CD4-positive, alpha-beta memory T cell (primary cell): ENCODE measurements at regions of chr10 and their contacts with region 1.

Region 1: DNA sequence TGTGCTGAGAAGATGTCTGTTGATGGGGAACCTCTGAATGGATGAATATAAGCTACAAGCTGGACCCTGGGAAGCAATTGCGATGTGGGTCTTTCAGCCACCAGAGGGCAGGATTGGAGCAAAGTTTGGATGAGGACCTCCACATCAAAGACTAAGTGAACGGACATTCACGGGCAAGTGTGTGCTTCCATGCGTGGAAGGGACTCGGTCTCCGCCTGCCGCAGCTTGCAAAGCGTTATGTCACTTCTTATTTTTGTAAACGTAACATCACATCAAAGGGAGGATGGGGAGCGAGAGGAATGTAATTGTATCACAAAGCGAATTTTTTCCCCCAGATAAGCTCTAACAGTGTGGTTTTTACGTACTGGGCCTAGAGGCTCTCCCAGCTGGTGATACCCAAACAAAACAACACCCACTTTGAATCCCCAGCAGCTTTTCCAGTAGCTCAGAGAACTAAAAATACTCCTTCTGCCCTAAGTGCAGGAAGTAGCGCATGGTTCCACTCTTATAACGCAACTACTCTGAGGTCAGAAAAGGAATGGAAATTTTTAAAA is 65.0 kb downstream of the VWA2 start:
- DNase-seq: peak; percentile 48 to 66 (median 55)
- H3K4me3 ChIP-seq: peak overlapping the region; percentile 53 to 83
- H3K4me3 Mint-ChIP-seq: peak overlapping the region; percentile 85 to 95 (median 89)
- H3K27ac ChIP-seq: peak overlapping the region; percentile 28
- H3K27ac Mint-ChIP-seq: peak overlapping the region in 6 of 7 donors; percentile 34 to 87 (median 58)
- H3K4me1 ChIP-seq: peaks cover 7% of the 10 kb centered on the region
- H3K4me1 Mint-ChIP-seq: peaks cover 5 to 13% (median 8%) of the 10 kb centered on the region in 4 donors
- H3K27me3 ChIP-seq: no peaks in the 10 kb centered on the region
- H3K27me3 Mint-ChIP-seq: no peaks in the 10 kb centered on the region

Region 2: DNA sequence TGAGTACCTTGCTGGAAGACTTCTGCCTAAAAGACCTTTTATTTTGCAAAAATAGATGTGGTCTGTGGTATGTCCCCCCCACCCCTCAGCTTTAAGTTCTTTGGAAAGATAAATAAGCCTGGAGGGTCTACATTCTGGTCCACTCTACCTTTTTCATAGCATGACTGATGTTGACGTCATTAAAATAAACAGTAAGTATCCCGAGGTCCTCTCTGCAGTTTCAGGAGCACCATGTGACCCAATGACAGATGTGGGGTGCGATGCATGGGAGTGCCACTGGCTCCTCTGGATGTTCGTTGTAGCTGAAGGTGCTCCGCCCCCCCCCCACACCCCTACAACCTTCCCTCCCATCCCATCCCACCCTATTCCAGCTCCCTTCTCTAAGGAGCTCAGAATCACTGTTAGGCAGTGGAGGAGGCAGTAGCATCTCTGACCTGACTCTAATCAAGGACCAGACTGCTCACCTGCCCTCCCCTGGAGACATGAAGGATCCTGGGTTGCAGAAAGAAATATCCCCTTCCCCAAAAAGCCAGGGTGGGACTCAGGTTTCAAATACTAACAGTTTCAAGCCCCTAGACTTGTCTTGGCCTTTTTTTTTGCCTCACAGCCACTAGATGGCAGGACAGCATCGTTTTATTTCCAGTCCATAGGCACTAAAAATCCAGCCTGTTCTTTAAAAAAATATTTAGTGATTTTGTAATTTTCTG is 599.3 kb before region 1 on chr10:
- CTCF ChIA-PET with region 1: interaction called, 8 read pairs
- POLR2A ChIA-PET with region 1: no interaction called
- intact Hi-C with region 1: loop called (anchors 1 kb)
- DNase-seq: peak in 2 of 5 donors; percentile 13
- H3K4me3 ChIP-seq: no peak overlapping the region
- H3K4me3 Mint-ChIP-seq: no peak overlapping the region
- H3K27ac ChIP-seq: no peak overlapping the region
- H3K27ac Mint-ChIP-seq: no peak overlapping the region
- H3K4me1 ChIP-seq: peaks cover 24% of the 10 kb centered on the region
- H3K4me1 Mint-ChIP-seq: peaks cover 24 to 46% (median 28%) of the 10 kb centered on the region in 4 donors
- H3K27me3 ChIP-seq: no peaks in the 10 kb centered on the region
- H3K27me3 Mint-ChIP-seq: no peaks in the 10 kb centered on the region

Region 3: DNA sequence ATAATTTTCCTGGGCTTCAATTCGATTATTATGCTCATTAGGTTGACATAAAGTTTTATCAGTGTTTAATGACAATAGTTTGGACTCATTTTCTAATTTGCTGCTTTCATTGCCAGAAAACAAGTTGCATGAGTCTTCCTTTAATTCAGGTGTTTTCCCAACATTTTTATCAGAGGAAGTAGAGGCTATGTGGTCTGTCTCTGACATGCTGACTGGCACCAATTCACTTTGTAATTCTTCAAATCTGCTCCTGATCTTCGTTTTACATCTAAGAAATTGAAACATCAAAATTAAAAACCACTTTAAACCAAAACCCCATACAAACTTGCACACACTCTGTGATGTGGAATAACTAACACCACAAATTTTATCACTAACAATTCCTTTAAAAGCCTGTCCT is 141.0 kb before region 1 on chr10:
- CTCF ChIA-PET with region 1: no interaction called
- POLR2A ChIA-PET with region 1: no interaction called
- intact Hi-C with region 1: no loop called
- DNase-seq: no peak
- H3K4me3 ChIP-seq: no peak overlapping the region
- H3K4me3 Mint-ChIP-seq: peak overlapping the region in 1 of 8 donors; percentile 22
- H3K27ac ChIP-seq: no peak overlapping the region
- H3K27ac Mint-ChIP-seq: peak overlapping the region in 3 of 7 donors; percentile 35 to 65 (median 62)
- H3K4me1 ChIP-seq: peaks cover 14% of the 10 kb centered on the region
- H3K4me1 Mint-ChIP-seq: peaks cover 37 to 62% (median 47%) of the 10 kb centered on the region in 4 donors
- H3K27me3 ChIP-seq: no peaks in the 10 kb centered on the region
- H3K27me3 Mint-ChIP-seq: no peaks in the 10 kb centered on the region

Region 4: DNA sequence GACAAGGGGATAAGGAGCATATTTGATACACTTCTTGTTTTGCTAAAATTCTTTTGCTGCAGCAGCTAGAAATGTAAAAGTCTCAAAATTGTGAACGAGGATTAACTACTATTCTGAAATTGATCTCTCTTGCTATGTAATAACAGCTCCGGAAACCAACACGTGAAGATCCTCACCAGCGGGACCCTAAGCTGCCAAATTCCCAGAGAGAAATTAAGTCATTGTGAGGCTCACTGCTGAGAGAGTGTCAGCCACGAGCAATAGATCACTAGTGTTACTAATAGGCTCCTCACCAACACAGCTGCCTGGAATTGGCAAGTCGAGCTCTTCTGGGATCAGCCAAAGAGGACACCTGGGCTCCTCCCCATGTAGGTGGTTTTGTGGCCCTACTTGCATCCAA is 70.6 kb before region 1 on chr10:
- CTCF ChIA-PET with region 1: no interaction called
- POLR2A ChIA-PET with region 1: no interaction called
- intact Hi-C with region 1: no loop called
- DNase-seq: no peak
- H3K4me3 ChIP-seq: no peak overlapping the region
- H3K4me3 Mint-ChIP-seq: no peak overlapping the region
- H3K27ac ChIP-seq: no peak overlapping the region
- H3K27ac Mint-ChIP-seq: no peak overlapping the region
- H3K4me1 ChIP-seq: no peaks in the 10 kb centered on the region
- H3K4me1 Mint-ChIP-seq: no peaks in the 10 kb centered on the region
- H3K27me3 ChIP-seq: peaks cover 16% of the 10 kb centered on the region
- H3K27me3 Mint-ChIP-seq: peaks cover 24 to 30% of the 10 kb centered on the region in 2 donors

Region 5: GRCh38 chr10:114315566-114316420 is 11.7 kb after region 1 on chr10:
- CTCF ChIA-PET with region 1: interaction called, 21 read pairs
- POLR2A ChIA-PET with region 1: interaction called, 3 read pairs
- intact Hi-C with region 1: no loop called
- DNase-seq: no peak
- H3K4me3 ChIP-seq: no peak overlapping the region
- H3K4me3 Mint-ChIP-seq: no peak overlapping the region
- H3K27ac ChIP-seq: no peak overlapping the region
- H3K27ac Mint-ChIP-seq: peak overlapping the region in 1 of 7 donors; percentile 18
- H3K4me1 ChIP-seq: no peaks in the 10 kb centered on the region
- H3K4me1 Mint-ChIP-seq: no peaks in the 10 kb centered on the region
- H3K27me3 ChIP-seq: no peaks in the 10 kb centered on the region
- H3K27me3 Mint-ChIP-seq: peaks cover 3 to 4% of the 10 kb centered on the region in 2 donors

Region 6: GRCh38 chr10:114550756-114551635 is 246.9 kb after region 1 on chr10:
- CTCF ChIA-PET with region 1: interaction called, 12 read pairs
- POLR2A ChIA-PET with region 1: no interaction called
- intact Hi-C with region 1: loop called (anchors 1 kb)
- DNase-seq: peak in 3 of 5 donors; percentile 33 to 39 (median 37)
- H3K4me3 ChIP-seq: no peak overlapping the region
- H3K4me3 Mint-ChIP-seq: no peak overlapping the region
- H3K27ac ChIP-seq: no peak overlapping the region
- H3K27ac Mint-ChIP-seq: peak overlapping the region in 4 of 7 donors; percentile 4 to 83 (median 40)
- H3K4me1 ChIP-seq: peaks cover 33% of the 10 kb centered on the region
- H3K4me1 Mint-ChIP-seq: peaks cover 13 to 28% (median 20%) of the 10 kb centered on the region in 4 donors
- H3K27me3 ChIP-seq: no peaks in the 10 kb centered on the region
- H3K27me3 Mint-ChIP-seq: no peaks in the 10 kb centered on the region

Region 7: GRCh38 chr10:114779803-114780609 is 475.9 kb after region 1 on chr10:
- CTCF ChIA-PET with region 1: interaction called, 86 read pairs
- POLR2A ChIA-PET with region 1: no interaction called
- intact Hi-C with region 1: no loop called
- DNase-seq: no peak
- H3K4me3 ChIP-seq: no peak overlapping the region
- H3K4me3 Mint-ChIP-seq: no peak overlapping the region
- H3K27ac ChIP-seq: no peak overlapping the region
- H3K27ac Mint-ChIP-seq: no peak overlapping the region
- H3K4me1 ChIP-seq: no peaks in the 10 kb centered on the region
- H3K4me1 Mint-ChIP-seq: peaks cover 0 to 1% (median 0%) of the 10 kb centered on the region in 4 donors
- H3K27me3 ChIP-seq: peaks cover 4% of the 10 kb centered on the region
- H3K27me3 Mint-ChIP-seq: no peaks in the 10 kb centered on the region

Region 8: GRCh38 chr10:114876602-114877300 is 572.7 kb after region 1 on chr10:
- CTCF ChIA-PET with region 1: interaction called, 8 read pairs
- POLR2A ChIA-PET with region 1: no interaction called
- intact Hi-C with region 1: loop called (anchors 1 kb)
- DNase-seq: peak in 1 of 5 donors; percentile 13
- H3K4me3 ChIP-seq: no peak overlapping the region
- H3K4me3 Mint-ChIP-seq: peak overlapping the region in 1 of 8 donors; percentile 36
- H3K27ac ChIP-seq: no peak overlapping the region
- H3K27ac Mint-ChIP-seq: no peak overlapping the region
- H3K4me1 ChIP-seq: no peaks in the 10 kb centered on the region
- H3K4me1 Mint-ChIP-seq: peaks cover 4 to 14% (median 8%) of the 10 kb centered on the region in 4 donors
- H3K27me3 ChIP-seq: no peaks in the 10 kb centered on the region
- H3K27me3 Mint-ChIP-seq: peaks cover 23 to 35% of the 10 kb centered on the region in 2 donors